Activated naive CD4-positive, alpha-beta T cell treated with anti-CD3 and anti-CD28 coated beads, Interleukin-2, amount 10 ng/mL, durations not matched to agents 7 days and 5 days (primary cell): ENCODE measurements at regions of chr18 and their contacts with region 1.

Region 1: DNA sequence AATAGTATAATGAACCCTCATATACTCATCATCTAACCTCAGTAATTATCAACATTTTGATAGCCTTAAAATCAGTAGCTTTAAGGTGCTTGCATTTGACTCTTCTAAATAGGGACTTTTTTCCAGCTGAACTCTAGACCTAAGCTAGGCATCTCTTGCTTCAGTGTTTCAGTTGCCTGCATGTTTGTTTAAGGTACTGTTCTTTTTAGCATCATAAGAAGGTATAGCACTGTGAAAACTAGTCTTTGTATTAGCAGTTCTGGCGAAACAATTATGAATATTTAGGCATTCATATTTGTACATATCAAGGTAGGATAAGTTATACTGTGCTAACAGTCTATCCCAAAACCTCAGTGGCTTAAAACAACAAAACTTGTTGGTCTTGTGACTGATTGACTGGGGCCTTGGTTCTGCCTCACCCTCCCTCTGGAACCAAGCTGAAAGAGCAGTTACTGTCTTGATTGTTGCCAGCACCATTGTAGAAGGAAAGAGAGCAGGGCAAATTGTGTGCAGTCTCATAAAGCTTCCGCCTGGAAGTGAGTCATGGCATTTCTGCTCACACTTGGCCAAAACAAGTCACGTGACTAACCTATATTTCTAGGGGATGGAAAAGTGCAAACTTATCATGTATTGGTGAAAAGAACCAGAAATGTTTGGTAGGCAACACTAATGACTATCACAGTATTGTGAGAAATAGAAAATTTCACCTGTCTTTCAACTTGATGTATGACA is 24.3 kb downstream of the GALNT1 start:
- DNase-seq: no peak
- H3K4me3 Mint-ChIP-seq: no peak overlapping the region
- H3K27ac Mint-ChIP-seq: no peak overlapping the region
- H3K4me1 Mint-ChIP-seq: no peaks in the 10 kb centered on the region
- H3K27me3 Mint-ChIP-seq: no peaks in the 10 kb centered on the region

Region 2: GRCh38 chr18:35616664-35617423 is 11.0 kb after region 1 on chr18:
- CTCF ChIA-PET with region 1: interaction called, 10 read pairs
- DNase-seq: peak; percentile 66
- H3K4me3 Mint-ChIP-seq: no peak overlapping the region
- H3K27ac Mint-ChIP-seq: no peak overlapping the region
- H3K4me1 Mint-ChIP-seq: peaks cover 14% of the 10 kb centered on the region
- H3K27me3 Mint-ChIP-seq: no peaks in the 10 kb centered on the region